ENCODE measurements at regions of chr4 and their contacts with region 1.

Region 1: GRCh38 chr4:150641612-150642011 is 59.7 kb downstream of the MAB21L2 start:
- DNase-seq: no peak
- H3K4me3 ChIP-seq: no peak overlapping the region
- H3K4me3 Mint-ChIP-seq: no peak overlapping the region
- H3K27ac ChIP-seq: no peak overlapping the region
- H3K27ac Mint-ChIP-seq: no peak overlapping the region
- H3K4me1 ChIP-seq: no peaks in the 10 kb centered on the region
- H3K4me1 Mint-ChIP-seq: no peaks in the 10 kb centered on the region
- H3K27me3 ChIP-seq: no peaks in the 10 kb centered on the region
- H3K27me3 Mint-ChIP-seq: no peaks in the 10 kb centered on the region

Region 2: DNA sequence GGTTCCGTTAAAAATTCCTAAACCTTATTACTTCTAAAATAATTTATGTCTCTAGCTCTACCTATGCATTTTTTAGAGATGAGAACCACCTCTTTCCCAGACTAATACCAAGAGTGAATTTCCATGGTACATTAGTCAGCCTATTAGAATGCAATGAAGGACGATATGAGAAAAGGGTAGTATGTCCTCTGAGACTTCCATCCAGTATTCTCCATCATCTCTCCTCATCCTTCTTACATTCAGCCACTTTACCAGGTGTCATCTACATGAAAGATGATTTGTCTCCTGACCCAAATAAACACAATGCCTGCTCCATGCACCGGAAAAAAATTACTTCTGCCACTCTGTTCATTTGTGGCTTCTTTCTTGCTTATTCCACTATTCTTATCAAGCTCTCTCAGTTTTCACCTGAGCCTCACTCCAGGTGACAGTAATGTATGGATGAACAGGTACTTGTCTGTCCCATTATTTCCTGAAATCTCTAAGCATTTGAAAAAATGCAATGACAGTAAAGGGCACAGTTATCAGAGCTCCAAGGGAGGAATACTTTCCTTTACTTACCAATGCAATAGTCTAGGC is 38.2 kb after region 1 on chr4:
- CTCF ChIA-PET with region 1: no interaction called
- POLR2A ChIA-PET with region 1: no interaction called
- intact Hi-C with region 1: loop called (anchors 5 kb)
- DNase-seq: no peak
- H3K4me3 ChIP-seq: no peak overlapping the region
- H3K4me3 Mint-ChIP-seq: no peak overlapping the region
- H3K27ac ChIP-seq: no peak overlapping the region
- H3K27ac Mint-ChIP-seq: no peak overlapping the region
- H3K4me1 ChIP-seq: no peaks in the 10 kb centered on the region
- H3K4me1 Mint-ChIP-seq: peaks cover 0 to 5% (median 0%) of the 10 kb centered on the region in 4 donors
- H3K27me3 ChIP-seq: no peaks in the 10 kb centered on the region
- H3K27me3 Mint-ChIP-seq: no peaks in the 10 kb centered on the region

Region 3: DNA sequence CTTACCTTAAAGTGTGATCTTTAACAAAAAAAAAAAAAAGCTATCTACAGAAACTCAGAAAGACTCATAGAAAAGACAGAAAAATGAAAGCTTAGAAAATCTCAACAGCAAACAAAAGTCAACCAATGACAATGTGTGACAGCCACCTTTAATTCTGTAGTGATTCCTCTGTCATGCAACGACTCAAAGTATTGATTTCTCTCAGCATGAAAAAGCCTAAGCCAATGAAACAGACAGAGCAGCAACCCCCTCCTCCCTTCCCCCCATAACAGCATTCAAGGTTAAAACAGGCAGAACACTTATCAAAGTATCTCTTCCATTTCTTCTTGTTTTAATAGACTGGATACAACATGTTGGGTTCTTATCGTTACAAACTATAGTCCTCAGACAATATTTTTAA is 52.8 kb after region 1 on chr4:
- CTCF ChIA-PET with region 1: no interaction called
- POLR2A ChIA-PET with region 1: no interaction called
- intact Hi-C with region 1: no loop called
- DNase-seq: no peak
- H3K4me3 ChIP-seq: no peak overlapping the region
- H3K4me3 Mint-ChIP-seq: no peak overlapping the region
- H3K27ac ChIP-seq: no peak overlapping the region
- H3K27ac Mint-ChIP-seq: no peak overlapping the region
- H3K4me1 ChIP-seq: no peaks in the 10 kb centered on the region
- H3K4me1 Mint-ChIP-seq: peaks cover 0 to 4% (median 1%) of the 10 kb centered on the region in 4 donors
- H3K27me3 ChIP-seq: no peaks in the 10 kb centered on the region
- H3K27me3 Mint-ChIP-seq: no peaks in the 10 kb centered on the region